Activated CD4-positive, alpha-beta T cell treated with anti-CD3 and anti-CD28 coated beads for 36 hours (primary cell): ENCODE measurements at regions of chrX and their contacts with region 1.

Region 1: DNA sequence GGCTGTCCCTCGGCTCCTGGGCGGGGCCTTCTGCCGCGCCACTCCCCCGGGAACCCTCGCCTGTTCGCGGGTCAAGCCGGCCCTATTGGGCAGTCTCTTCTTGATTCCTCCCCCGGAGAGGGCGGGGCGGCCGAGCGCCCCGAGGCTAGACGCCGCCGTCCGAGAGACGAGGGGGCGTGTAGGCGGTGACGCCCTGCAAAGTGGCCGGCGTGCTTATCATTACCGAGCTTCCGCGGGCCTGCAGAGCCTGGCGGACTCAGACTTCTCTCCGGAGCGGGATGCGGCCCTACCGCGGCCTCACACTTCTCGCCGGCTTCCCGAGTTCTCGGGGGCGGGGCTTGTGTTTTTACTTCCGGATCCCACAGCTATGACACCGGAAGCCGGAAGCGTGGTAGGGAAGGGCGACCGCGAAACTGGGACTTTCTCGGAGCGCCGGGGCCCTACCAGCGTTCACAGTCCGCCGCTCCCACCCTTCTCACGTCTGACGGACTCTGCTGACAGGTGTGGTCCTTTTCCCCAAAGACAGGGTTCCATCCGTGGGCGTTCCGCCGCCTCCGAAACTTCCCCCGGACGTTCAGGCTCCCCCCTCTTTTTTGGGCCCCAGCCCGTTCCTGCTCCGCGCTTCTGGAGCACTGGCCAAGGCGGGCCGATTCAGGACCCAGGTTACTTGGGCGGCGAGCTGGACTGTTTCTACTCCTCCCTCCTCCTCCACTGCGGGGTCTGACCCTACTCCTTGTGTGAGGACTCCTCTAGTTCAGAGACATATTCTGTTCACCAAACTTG is at the start of gene IKBKG:
- DNase-seq: peak; percentile 92
- ATAC-seq: peak; percentile 81
- H3K4me3 Mint-ChIP-seq: peak within 1 kb of the TSS; percentile 99
- H3K27ac Mint-ChIP-seq: peak within 1 kb of the TSS; percentile 97
- H3K4me1 Mint-ChIP-seq: peaks cover 39% of the 10 kb centered on the region
- H3K27me3 Mint-ChIP-seq: no peaks in the 10 kb centered on the region
- total RNA-seq, gene IKBKG: 32.7 to 33.0 TPM

Region 2: GRCh38 chrX:153724252-153725040 is 823.0 kb before region 1 on chrX and contains the starts of genes ABCD1 and BCAP31:
- CTCF ChIA-PET with region 1: no interaction called
- POLR2A ChIA-PET with region 1: no interaction called
- intact Hi-C with region 1: loop called in 1 of 2 experiments (anchors 1 kb)
- DNase-seq: peak; percentile 93
- ATAC-seq: peak; percentile 84
- H3K4me3 Mint-ChIP-seq: peak within 1 kb of the TSS; percentile 89
- H3K27ac Mint-ChIP-seq: peak within 1 kb of the TSS; percentile 87
- H3K4me1 Mint-ChIP-seq: peaks cover 20% of the 10 kb centered on the region
- H3K27me3 Mint-ChIP-seq: no peaks in the 10 kb centered on the region
- total RNA-seq, gene ABCD1: 4.5 to 4.8 TPM
- total RNA-seq, gene BCAP31: 78.0 to 106 TPM

Region 3: DNA sequence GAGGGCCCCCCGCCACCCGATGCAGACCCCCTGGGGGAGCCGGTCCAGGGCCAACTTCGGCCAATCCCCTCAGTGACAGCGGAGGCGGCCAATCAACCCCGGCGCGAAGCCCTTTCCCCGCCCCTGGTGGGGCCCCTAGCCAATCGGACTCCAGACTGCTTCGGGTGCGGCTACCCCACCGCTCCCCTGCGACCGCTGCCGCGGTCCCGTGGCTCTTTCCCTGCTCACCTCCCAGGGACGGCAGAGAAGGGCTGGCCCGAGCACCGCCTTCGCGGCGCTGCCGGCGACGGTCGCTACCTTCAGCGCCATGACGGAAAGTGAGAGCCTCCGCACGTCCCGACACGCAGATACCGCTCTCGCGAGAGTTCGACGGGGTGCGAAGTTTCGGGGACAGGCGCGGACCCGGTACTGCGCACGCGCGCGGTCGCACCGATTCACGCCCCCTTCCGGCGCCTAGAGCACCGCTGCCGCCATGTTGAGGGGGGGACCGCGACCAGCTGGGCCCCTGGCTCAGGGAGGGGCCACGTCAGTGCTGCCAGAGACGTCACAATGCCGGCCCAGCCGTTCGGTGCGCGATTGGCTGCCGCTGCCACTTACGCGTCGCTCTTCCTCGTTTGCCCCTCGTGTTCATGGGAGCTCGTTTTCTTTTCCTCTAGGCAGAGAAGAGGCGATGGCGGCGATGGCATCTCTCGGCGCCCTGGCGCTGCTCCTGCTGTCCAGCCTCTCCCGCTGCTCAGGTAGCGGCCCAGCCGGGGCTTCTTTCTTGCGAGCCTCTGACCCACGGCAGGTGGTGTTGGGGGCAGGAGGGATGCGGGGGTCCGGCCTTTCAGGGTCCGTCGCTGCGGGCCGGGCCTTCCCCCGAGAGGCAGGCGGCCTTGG is 753.2 kb before region 1 on chrX and contains the starts of genes IDH3G and SSR4:
- CTCF ChIA-PET with region 1: no interaction called
- POLR2A ChIA-PET with region 1: no interaction called
- intact Hi-C with region 1: loop called in 1 of 2 experiments (anchors 1 kb)
- DNase-seq: peak; percentile 96
- ATAC-seq: peak; percentile 97
- H3K4me3 Mint-ChIP-seq: peak within 1 kb of the TSS; percentile 93
- H3K27ac Mint-ChIP-seq: peak within 1 kb of the TSS; percentile 93
- H3K4me1 Mint-ChIP-seq: peaks cover 21% of the 10 kb centered on the region
- H3K27me3 Mint-ChIP-seq: no peaks in the 10 kb centered on the region
- total RNA-seq, gene IDH3G: 48.8 to 62.4 TPM
- total RNA-seq, gene SSR4: 124 to 146 TPM

Region 4: DNA sequence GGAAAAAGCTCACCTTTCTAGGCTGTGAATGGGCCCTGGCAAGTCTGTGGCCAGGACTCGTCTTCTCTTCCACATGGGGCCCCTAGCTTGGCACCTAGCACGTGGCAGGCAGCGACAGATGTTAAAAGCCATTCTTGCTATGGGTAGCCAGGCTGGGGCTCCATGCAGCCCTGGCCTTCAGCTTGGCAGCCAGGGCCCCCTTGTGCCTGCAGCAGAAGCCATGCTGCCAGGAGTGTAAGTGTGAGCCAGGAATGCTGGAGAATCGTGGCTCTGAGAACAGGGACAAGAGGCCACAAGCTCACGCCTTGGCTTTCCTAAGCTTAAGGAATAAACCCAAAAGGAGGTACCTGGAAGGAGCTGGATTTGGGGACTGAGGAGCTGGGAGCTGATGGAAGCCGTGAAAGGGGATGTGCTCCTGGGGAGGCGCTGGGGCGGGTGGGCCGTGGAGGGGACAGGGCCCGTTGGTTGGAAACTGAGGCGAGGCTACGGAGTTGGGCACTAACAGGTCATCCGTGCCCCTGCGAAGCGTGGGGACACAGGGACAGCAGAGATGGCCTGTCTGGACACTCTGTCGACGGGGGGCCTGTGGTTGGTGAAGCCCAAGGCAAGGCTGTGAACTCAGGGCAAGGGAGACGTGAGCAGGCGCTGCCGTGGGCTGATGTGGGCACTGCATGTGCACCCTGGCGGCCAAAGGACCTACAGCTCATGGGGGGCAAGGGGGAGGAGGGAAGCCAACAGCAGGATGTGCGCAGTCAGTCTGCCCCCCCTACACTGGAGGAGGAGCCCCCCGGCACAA is 404.3 kb before region 1 on chrX:
- CTCF ChIA-PET with region 1: no interaction called
- POLR2A ChIA-PET with region 1: no interaction called
- intact Hi-C with region 1: no loop called
- DNase-seq: no peak
- ATAC-seq: no peak
- H3K4me3 Mint-ChIP-seq: no peak overlapping the region
- H3K27ac Mint-ChIP-seq: no peak overlapping the region
- H3K4me1 Mint-ChIP-seq: no peaks in the 10 kb centered on the region
- H3K27me3 Mint-ChIP-seq: no peaks in the 10 kb centered on the region

Region 5: GRCh38 chrX:154378782-154379591 is 168.4 kb before region 1 on chrX and contains the start of gene EMD:
- CTCF ChIA-PET with region 1: no interaction called
- POLR2A ChIA-PET with region 1: no interaction called
- intact Hi-C with region 1: loop called in 1 of 2 experiments (anchors 1 kb)
- DNase-seq: peak; percentile 98
- ATAC-seq: peak; percentile 88
- H3K4me3 Mint-ChIP-seq: peak within 1 kb of the TSS; percentile 84
- H3K27ac Mint-ChIP-seq: peak within 1 kb of the TSS; percentile 91
- H3K4me1 Mint-ChIP-seq: peaks cover 23% of the 10 kb centered on the region
- H3K27me3 Mint-ChIP-seq: no peaks in the 10 kb centered on the region
- total RNA-seq, gene EMD: 75.9 to 89.4 TPM

Region 6: DNA sequence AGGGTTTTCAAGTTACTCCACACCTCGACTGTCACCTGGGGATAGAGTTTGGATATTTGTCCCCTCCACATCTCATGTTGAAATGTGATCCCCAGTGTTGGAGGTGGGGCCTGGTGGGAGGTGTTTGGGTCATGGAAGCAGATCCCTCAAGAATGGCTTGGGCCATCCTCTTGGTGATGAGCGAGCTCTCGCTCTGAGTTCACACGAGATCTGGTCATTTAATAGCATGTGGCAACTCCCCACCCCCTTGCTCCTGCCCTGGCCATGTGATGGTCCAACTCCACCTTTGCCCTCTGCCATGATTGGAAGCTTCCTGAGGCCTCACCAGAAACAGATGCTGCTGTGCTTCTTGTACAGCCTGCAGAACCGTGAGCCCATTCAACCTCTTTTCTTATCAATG is 45.8 kb after region 1 on chrX:
- CTCF ChIA-PET with region 1: no interaction called
- POLR2A ChIA-PET with region 1: no interaction called
- intact Hi-C with region 1: no loop called
- DNase-seq: no peak
- ATAC-seq: no peak
- H3K4me3 Mint-ChIP-seq: no peak overlapping the region
- H3K27ac Mint-ChIP-seq: no peak overlapping the region
- H3K4me1 Mint-ChIP-seq: peaks cover 3% of the 10 kb centered on the region
- H3K27me3 Mint-ChIP-seq: no peaks in the 10 kb centered on the region

Region 7: DNA sequence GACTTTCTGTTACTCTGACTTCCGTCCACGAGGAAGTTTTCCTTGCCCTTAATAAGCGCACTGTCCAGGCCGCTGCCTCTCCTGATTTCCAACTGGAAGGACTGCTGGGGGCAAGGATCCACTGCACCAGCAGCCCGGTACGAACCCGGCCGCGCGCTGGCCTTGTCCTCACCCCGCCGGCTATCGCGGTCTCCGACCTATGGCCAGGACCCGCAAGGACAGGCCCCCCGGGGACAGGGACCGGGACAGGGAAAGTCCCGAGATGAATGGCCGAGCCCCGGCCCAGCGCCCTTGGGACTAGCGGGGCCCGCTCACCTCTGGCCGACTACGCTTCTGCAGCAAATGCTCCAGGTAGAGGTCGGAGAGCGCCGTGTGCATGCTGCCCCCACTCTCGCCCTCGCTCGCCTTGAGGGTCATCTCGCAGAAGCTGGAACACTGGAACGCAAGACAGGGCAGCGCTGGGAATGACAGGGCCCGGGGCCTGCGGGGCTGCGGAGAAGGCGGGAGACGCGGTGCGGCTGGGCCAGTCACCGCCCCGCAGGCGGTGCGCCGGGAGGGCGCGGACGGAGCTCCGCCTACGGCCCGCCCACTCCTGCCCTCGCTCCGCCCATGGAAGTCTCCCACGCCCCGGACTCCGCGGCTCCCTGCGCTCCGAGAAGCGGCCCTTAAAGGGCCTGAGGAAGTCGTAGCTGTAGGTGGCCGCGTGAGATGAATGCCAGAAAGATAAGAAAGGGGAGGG is 257.7 kb after region 1 on chrX and contains the start of gene MPP1:
- CTCF ChIA-PET with region 1: no interaction called
- POLR2A ChIA-PET with region 1: no interaction called
- intact Hi-C with region 1: loop called in 1 of 2 experiments (anchors 1 kb)
- DNase-seq: peak; percentile 82
- ATAC-seq: peak; percentile 81
- H3K4me3 Mint-ChIP-seq: peak within 1 kb of the TSS; percentile 78
- H3K27ac Mint-ChIP-seq: peak within 1 kb of the TSS; percentile 80
- H3K4me1 Mint-ChIP-seq: peaks cover 38% of the 10 kb centered on the region
- H3K27me3 Mint-ChIP-seq: no peaks in the 10 kb centered on the region
- total RNA-seq, gene MPP1: 24.1 to 27.6 TPM